A673 (cell line): ENCODE measurements at regions of chr14 and their contacts with region 1.

Region 1: DNA sequence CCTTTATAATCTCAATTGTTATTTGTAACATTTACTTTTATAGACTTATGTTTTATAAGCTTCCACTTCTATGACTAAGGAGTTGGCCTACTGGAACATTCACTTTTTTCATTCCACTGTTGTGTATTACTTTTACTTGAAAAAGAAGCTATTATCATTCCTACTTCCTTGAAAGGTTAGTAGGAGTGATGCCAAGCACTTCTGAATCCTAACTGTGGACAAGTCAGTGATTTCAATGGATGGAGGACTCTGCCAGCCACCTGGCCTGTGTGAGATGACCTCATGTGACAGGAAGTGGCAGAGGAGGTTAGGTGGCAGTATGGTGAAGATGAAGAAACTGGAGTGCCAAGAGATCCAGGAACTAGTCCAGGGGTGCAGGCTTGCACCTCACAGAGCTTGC is 46.0 kb downstream of the TECPR2 start:
- DNase-seq: no peak
- H3K4me3 ChIP-seq: no peak overlapping the region
- H3K27ac ChIP-seq: no peak overlapping the region
- H3K4me1 ChIP-seq: no peaks in the 10 kb centered on the region
- H3K27me3 ChIP-seq: no peaks in the 10 kb centered on the region
- CTCF ChIP-seq: no peak

Region 2: GRCh38 chr14:102430212-102430908 is 21.6 kb after region 1 on chr14:
- CTCF ChIA-PET with region 1: interaction called, 10 read pairs
- POLR2A ChIA-PET with region 1: no interaction called
- intact Hi-C with region 1: no loop called
- DNase-seq: no peak
- H3K4me3 ChIP-seq: no peak overlapping the region
- H3K27ac ChIP-seq: no peak overlapping the region
- H3K4me1 ChIP-seq: no peaks in the 10 kb centered on the region
- H3K27me3 ChIP-seq: no peaks in the 10 kb centered on the region
- CTCF ChIP-seq: no peak